Activated CD8-positive, alpha-beta memory T cell treated with anti-CD3 and anti-CD28 coated beads, Interleukin-2, amount 10 ng/mL, durations not matched to agents 7 days and 5 days (primary cell): ENCODE measurements at regions of chr20 and their contacts with region 1.

Region 1: DNA sequence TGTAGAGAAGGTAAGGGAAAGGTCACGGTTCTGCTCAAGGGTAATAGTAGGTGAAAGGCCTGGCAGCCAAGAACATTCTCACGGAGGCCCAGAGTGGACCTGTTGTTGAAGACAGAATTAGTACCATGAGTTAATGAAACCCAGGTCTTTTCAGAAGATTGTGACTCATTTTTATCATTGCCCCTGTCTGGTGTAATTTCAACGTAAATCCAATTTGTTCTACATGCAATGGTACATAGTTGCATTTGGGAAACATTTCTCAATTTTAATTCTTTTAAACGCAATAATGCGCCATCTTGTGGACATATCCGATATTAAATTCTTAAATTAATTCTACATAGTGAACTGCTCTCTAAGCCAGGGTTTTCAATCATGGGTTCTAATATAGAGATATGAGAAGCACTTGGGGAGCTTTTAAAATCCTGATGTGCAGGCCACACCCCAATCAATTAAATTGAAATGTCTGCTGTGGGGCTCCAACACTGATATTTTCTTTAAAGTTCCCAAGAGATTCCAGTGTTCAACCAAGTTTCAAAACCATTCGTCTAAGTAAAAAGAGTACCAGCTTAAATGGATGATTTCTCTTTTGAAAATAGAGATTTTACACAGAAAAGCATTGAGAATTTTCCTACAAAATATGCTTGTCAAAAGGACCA is 257.4 kb downstream of the PLCB1 start:
- DNase-seq: no peak
- ATAC-seq: no peak
- H3K4me3 Mint-ChIP-seq: no peak overlapping the region
- H3K27ac Mint-ChIP-seq: no peak overlapping the region
- H3K4me1 Mint-ChIP-seq: peaks cover 12% of the 10 kb centered on the region
- H3K27me3 Mint-ChIP-seq: no peaks in the 10 kb centered on the region

Region 2: DNA sequence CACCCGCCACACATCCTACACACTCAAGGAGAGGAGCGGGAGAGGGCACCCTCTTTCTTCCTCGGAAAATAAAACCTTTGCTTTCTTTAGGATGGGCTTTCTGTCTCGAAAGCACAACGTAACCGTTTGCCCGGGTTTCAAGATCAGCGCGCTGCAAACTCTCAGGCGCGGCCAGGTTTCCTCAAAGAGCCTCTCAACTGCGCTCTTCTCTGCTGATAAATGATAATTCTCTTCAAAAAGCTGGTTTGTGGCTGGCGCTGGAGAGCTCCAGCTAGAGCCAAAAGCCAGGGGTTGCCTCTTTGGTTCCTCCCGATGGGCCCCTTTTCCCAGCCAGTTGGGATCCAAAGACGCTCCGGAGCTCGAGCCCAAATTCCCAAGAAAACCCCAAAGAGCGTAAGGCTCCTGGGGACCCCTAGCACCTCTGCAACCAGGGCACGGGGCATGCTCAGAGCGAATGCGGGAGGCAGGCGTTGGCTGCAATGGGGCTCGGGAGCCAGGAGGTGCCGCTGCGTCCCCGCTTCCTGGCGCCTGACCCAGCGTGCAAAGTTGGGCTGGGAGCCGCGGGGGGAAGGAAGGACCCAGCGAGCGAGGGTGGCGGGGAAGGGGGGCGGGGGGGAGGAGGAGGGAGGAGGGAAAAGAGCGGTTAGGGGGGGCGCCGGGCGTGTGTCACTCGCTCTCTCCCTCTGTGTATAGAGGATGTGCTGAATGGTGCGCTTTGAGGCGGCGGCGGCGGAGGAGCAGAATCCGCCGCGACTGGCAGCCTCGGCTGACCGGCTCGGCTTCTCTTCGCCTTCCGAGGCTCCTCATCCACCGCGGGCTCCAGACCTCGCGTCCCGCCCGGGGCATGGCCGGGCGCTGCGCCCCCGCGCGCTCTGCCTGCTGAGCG is 257.7 kb before region 1 on chr20 and contains the start of gene PLCB1:
- CTCF ChIA-PET with region 1: interaction called, 14 read pairs
- DNase-seq: peak; percentile 85
- ATAC-seq: peak; percentile 95
- H3K4me3 Mint-ChIP-seq: peak within 1 kb of the TSS; percentile 66
- H3K27ac Mint-ChIP-seq: no peak within 1 kb of the TSS
- H3K4me1 Mint-ChIP-seq: peaks cover 33% of the 10 kb centered on the region
- H3K27me3 Mint-ChIP-seq: peaks cover 59% of the 10 kb centered on the region
- total RNA-seq, gene PLCB1: 2.4 to 3.2 TPM